Dorsolateral prefrontal cortex (tissue), 120 donors: ENCODE measurements at regions of chr7 and their contacts with region 1.

Region 1: GRCh38 chr7:12490117-12490688 is 80.3 kb upstream of the SCIN start:
- DNase-seq: no peak
- H3K4me3 ChIP-seq: no peak overlapping the region
- H3K27ac ChIP-seq: no peak overlapping the region
- H3K27me3 ChIP-seq: peaks cover 0 to 4% (median 0%) of the 10 kb centered on the region in 45 donors
- CTCF ChIP-seq: peak; percentile 11 to 80 (median 56)

Region 2: DNA sequence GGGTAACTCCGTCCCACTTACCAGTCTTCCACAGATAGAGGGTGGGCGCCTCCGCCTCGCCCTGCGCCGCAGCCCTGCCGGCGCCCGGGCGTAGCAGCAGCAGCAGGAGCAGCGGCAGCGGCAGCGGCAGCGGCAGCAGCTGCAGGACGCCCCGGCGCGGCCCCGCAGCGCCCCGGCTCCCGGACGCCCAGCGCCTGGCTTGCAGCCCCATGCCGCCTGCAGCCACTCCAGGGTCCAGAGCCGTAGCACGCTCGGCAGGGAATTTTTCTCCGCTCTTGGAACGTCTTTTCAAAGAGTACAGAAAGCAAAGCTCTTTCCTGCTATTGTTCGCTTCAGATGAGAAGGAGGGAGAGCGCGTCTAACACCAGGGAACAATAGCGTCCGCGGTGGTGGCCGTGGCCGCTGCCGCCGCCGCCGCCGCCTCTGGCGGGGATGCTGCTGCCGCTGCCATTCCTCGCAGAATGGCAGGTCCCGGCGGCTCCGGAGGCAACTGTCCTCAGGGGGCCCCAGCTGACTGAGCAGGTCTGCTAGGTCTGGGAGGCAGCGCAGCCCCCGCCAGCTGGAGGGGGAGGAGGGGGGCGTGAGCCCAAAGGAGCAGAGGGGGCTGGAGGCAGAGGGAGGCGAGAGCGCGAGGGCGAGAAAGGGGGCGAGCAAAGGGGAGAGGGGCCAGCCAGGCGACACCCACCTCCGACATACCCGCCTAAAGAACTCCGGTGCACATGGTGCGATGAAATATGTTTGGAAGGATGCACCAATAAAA is 658.3 kb before region 1 on chr7 and contains the start of gene THSD7A:
- intact Hi-C with region 1: loop called (anchors 5 to 10 kb)
- DNase-seq: peak in 6 of 10 donors; percentile 22 to 74 (median 37)
- H3K4me3 ChIP-seq: peak within 1 kb of the TSS; percentile 43 to 84 (median 68)
- H3K27ac ChIP-seq: peak within 1 kb of the TSS in 52 of 59 donors; percentile 3 to 84 (median 66)
- H3K27me3 ChIP-seq: no peaks in the 10 kb centered on the region
- CTCF ChIP-seq: peak in 16 of 56 donors; percentile 4 to 46 (median 17)
- total RNA-seq, gene THSD7A: 6.6 to 25.9 (median 12.9) TPM

Region 3: DNA sequence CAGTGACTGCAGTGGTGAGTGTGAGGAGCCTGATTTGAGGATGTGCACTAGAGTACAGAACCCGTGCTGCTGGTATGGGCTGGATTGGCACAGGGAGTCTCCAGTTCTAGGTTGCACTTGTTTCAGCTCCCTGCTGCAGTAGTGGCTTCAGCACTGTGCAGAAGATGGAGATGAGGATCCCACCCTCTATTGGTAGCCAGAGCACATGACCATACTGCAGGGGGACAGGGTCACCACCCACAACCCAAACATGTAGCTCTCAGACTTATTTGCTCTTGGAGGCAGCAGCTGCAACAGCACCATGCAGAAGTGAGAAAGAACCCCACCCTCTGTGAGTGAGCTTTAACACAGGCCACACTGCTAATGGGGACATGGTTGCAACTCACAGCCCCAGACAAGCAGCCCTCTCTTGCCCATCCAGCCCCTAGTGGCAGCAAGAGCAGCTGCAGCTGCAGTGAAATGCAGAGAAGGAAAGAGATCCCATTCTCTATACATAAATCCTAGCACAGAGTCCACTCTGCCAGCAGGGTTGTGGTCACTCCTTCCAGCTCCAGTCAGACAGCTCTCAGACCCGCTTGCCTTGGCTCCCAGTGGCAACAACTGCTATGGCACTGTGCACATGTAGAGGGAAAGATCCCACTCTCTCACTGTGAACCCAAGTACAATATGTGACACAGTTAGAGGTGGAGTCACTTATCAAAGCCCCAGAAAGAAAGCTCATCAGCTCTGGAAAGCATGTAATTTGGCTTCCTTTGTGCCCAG is 28.9 kb after region 1 on chr7:
- intact Hi-C with region 1: no loop called
- DNase-seq: no peak
- H3K4me3 ChIP-seq: no peak overlapping the region
- H3K27ac ChIP-seq: no peak overlapping the region
- H3K27me3 ChIP-seq: peaks cover 0 to 12% (median 0%) of the 10 kb centered on the region in 45 donors
- CTCF ChIP-seq: peak in 3 of 56 donors; percentile 6 to 35 (median 20)